HEK293 (cell line): ENCODE measurements at regions of chr4 and their contacts with region 1.

Region 1: DNA sequence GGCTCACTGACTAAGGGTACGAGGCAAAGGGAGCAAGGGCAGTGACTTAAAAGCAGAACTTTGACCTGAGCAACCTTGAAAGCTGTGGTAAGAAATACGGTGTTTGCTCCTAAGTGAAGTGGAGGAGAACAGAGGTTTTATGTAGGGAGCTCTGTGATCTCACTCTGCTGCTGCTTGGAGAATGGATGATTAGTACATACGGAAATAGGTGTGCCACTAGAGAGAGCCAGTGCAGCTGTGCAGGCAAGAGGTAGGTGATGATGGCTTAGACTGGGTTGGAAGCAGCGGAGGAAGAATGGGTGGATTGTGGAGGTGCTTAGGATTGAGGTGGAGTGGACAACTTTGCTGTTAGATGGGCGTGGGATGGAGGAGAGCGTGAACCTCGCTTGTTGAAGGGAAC is 85.0 kb downstream of the FAM193A start:
- H3K4me3 ChIP-seq: no peak overlapping the region
- H3K27ac ChIP-seq: no peak overlapping the region
- H3K4me1 ChIP-seq: peaks cover 2% of the 10 kb centered on the region; the same call in 1 of the 2 replicates
- CTCF ChIP-seq: no peak

Region 2: DNA sequence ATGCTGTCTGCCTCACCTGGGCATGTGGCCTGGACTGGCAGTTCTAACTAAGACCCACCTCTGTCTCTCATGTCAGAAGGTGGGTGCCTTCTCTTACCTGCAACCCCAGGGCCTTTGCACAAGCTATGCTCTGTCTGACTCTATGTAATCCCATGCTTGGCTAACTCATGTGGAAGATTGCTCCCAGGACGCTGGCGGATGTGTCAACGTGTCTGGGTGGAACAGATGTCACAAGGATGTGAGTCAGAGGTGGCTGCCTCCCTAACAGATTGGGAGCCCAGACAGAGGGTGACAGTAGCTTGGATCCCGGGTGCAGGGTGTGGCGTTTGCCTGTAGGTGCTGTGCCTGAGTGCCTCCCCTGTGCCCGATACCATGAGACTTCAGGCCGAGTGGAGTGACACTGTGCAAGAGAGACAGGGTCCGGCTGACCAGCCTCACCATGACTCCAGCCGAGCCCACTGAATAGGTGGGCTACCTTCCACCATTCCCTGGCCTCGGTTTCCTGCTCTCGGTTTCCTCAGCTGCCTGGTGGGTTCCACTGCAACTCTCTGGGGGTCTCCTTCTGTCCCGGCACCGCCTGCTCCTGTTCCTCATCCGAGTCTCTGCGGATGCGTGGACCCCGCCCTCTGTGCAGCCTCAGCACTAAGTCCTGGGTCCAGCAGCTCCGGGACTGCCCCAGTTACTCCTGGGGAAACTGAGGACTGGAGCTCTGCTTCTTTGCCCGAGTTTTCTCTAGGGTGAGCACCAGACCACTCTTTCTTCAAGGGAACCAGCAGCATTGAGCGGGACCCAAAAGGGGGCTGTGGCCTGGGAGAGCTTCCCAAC is 182.4 kb after region 1 on chr4:
- CTCF ChIA-PET with region 1: no interaction called
- POLR2A ChIA-PET with region 1: interaction called, 11 read pairs
- H3K4me3 ChIP-seq: no peak overlapping the region
- H3K27ac ChIP-seq: no peak overlapping the region
- H3K4me1 ChIP-seq: no peaks in the 10 kb centered on the region
- CTCF ChIP-seq: no peak